Naive thymus-derived CD4-positive, alpha-beta T cell (primary cell): ENCODE measurements at regions of chr3 and their contacts with region 1.

Region 1: GRCh38 chr3:197700095-197700494 is 36.6 kb downstream of the RUBCN start:
- DNase-seq: no peak
- ATAC-seq: no peak
- H3K4me3 ChIP-seq: no peak overlapping the region
- H3K4me3 Mint-ChIP-seq: no peak overlapping the region
- H3K27ac ChIP-seq: no peak overlapping the region
- H3K27ac Mint-ChIP-seq: no peak overlapping the region
- H3K4me1 ChIP-seq: no peaks in the 10 kb centered on the region
- H3K4me1 Mint-ChIP-seq: peaks cover 0 to 9% (median 0%) of the 10 kb centered on the region in 7 donors
- H3K27me3 ChIP-seq: no peaks in the 10 kb centered on the region
- H3K27me3 Mint-ChIP-seq: no peaks in the 10 kb centered on the region

Region 2: GRCh38 chr3:197725524-197725923 is 25.4 kb after region 1 on chr3:
- CTCF ChIA-PET with region 1: no interaction called
- POLR2A ChIA-PET with region 1: no interaction called
- intact Hi-C with region 1: no loop called
- DNase-seq: no peak
- ATAC-seq: no peak
- H3K4me3 ChIP-seq: no peak overlapping the region
- H3K4me3 Mint-ChIP-seq: no peak overlapping the region
- H3K27ac ChIP-seq: no peak overlapping the region
- H3K27ac Mint-ChIP-seq: peak overlapping the region in 2 of 9 donors; percentile 15 to 29
- H3K4me1 ChIP-seq: peaks cover 0 to 5% of the 10 kb centered on the region in 2 donors
- H3K4me1 Mint-ChIP-seq: peaks cover 13 to 42% (median 25%) of the 10 kb centered on the region in 7 donors
- H3K27me3 ChIP-seq: no peaks in the 10 kb centered on the region
- H3K27me3 Mint-ChIP-seq: no peaks in the 10 kb centered on the region

Region 3: GRCh38 chr3:197736491-197737318 is 36.6 kb after region 1 on chr3 and contains the start of gene RUBCN:
- CTCF ChIA-PET with region 1: no interaction called
- POLR2A ChIA-PET with region 1: no interaction called
- intact Hi-C with region 1: loop called in 1 of 2 experiments (anchors 5 kb)
- DNase-seq: peak; percentile 81 to 95 (median 93)
- ATAC-seq: peak; percentile 98
- H3K4me3 ChIP-seq: peak within 1 kb of the TSS; percentile 67
- H3K4me3 Mint-ChIP-seq: peak within 1 kb of the TSS; percentile 82 to 99 (median 96)
- H3K27ac ChIP-seq: peak within 1 kb of the TSS; percentile 83
- H3K27ac Mint-ChIP-seq: peak within 1 kb of the TSS; percentile 89 to 99 (median 97)
- H3K4me1 ChIP-seq: peaks cover 9 to 10% of the 10 kb centered on the region in 2 donors
- H3K4me1 Mint-ChIP-seq: peaks cover 29 to 52% (median 32%) of the 10 kb centered on the region in 7 donors
- H3K27me3 ChIP-seq: no peaks in the 10 kb centered on the region
- H3K27me3 Mint-ChIP-seq: no peaks in the 10 kb centered on the region
- total RNA-seq, gene RUBCN: 43.3 to 61.7 (median 52.9) TPM